ENCODE measurements at regions of chrX and their contacts with region 1.

Region 1: GRCh38 chrX:107484002-107484726 is 34.7 kb downstream of the FRMPD3 start:
- DNase-seq: no peak
- H3K4me3 ChIP-seq: no peak overlapping the region
- H3K27ac ChIP-seq: no peak overlapping the region
- H3K4me1 ChIP-seq: no peaks in the 10 kb centered on the region
- H3K27me3 ChIP-seq: peaks cover 0 to 72% of the 10 kb centered on the region in 2 donors
- CTCF ChIP-seq: no peak
- POLR2A ChIP-seq: no peak

Region 2: DNA sequence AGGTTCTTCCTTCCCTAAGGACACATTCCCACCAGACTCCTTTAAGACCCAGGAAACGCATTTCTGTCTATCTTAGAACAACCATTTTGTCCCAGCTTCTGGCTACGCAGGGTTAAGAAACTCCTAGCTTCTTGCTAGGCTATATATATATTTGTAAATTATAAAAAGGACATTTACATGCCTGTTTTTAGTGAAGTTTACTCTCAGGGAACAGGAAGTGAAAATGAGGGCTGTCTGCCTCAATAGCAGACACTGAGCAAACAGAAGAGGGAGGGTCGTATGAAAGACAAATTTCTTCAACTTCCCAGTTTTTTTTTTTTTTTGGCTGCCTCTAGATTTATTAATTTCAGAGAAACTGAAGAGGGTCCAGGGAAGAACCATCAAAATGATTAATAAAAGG is 44.0 kb before region 1 on chrX:
- intact Hi-C with region 1: no loop called
- DNase-seq: no peak
- H3K4me3 ChIP-seq: no peak overlapping the region
- H3K27ac ChIP-seq: no peak overlapping the region
- H3K4me1 ChIP-seq: no peaks in the 10 kb centered on the region
- H3K27me3 ChIP-seq: peaks cover 0 to 69% of the 10 kb centered on the region in 2 donors
- CTCF ChIP-seq: no peak
- POLR2A ChIP-seq: no peak

Region 3: DNA sequence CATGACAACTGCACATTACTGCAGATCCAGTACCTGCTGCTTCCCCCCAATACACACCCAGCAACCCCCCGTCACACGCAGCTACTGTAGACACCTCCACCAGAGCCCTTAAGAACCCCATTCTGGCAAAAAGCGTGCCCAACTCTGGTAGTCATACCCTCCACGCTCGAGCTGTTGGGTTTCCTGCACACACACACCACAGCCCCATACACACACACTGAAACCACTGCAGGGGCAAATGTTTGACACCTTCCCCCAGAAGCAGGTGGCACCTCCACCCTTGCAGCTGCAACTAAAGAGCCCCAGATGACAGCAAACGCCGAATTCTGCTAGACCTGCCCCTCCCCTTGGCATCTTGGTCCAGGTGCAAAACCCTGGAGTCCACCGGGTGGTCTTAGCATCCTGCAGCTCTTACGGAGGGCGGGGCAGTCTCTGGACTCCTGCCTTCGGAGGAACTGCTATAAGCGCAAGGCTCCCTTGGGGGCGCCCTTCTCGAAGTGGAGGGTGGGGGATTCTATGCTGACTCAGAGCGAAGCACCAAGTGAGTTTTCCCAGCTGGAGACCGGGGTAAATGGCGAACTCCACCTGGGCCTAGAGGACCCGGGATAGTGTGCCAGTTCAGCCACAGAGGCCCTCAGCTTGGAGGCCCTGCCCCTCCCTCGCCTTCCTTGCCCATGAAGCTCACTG is 33.2 kb before region 1 on chrX:
- intact Hi-C with region 1: loop called (anchors 1 kb)
- DNase-seq: no peak
- H3K4me3 ChIP-seq: no peak overlapping the region
- H3K27ac ChIP-seq: no peak overlapping the region
- H3K4me1 ChIP-seq: no peaks in the 10 kb centered on the region
- H3K27me3 ChIP-seq: peaks cover 3 to 93% of the 10 kb centered on the region in 2 donors
- CTCF ChIP-seq: no peak
- POLR2A ChIP-seq: no peak

Measured in breast epithelium (tissue), 4 donors.